ENCODE measurements at regions of chr5 and their contacts with region 1.

Region 1: GRCh38 chr5:133868946-133869518 is 99.4 kb downstream of the C5orf15 start:
- DNase-seq: peak; percentile 77
- CTCF ChIP-seq: peak; percentile 70

Region 2: DNA sequence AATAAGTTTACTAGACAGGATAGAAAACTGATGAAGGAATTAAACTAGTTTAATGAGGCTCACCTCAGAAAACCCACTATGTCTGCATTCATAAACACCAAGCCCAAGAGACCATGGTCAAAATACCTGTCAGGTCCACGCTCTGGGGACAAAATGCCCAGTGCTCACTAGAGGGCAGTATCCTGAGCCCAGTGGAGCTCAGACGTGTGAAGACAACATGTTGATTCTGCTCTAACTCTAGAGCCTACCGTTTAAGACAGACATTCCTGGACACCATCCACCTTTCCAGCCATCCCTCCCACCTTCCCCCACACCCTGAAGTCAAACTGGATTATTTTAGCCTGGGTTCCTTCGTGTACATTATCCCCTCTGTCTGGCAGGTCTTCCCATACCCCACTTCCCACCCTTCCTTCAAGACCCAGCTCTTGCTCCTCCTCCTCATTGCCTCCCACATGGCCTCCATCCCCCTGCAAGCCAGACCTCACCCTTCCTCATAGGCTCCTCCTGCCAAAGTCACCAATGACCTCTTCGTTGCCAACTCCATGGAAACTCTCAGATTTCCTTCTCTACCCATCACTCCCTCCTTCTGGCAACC is 114.4 kb before region 1 on chr5:
- CTCF ChIA-PET with region 1: interaction called, 19 read pairs
- POLR2A ChIA-PET with region 1: no interaction called
- DNase-seq: peak; percentile 47
- CTCF ChIP-seq: peak; percentile 59

Region 3: DNA sequence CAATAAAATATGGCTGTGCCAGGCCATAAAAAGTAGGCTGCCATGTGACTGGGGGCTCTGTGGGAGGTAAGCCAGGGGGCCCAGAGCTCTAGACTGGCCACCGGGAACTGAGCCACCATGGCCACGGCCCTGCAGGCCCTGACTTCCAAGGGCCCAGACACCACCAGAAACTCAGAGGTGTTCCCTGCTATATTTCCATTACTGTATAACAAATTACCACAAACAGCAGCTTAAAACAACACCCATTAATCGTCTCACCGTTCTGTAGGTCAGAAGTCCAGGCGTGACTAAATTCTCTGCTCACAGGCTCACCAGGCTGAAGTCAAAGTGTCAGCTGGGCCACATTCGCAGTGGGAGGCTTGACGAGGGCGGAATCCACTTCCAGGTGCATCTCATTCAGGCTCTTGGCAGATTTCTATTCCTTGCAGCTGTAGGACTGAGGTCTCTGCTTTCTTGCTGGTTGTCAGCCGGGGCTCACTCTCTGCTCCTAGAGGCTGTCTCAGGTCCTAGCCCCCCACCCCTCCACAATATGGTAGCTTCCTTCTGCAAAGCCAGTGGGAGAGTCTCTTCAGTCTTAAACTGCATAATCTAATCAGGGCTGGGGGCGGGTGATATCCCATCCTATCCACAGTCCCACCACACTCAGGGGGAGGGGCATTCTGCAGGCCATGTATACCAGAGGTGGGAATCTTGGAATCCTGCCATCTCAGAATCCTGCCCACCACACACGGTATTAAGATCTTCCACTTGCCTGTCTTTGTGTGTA is 26.0 kb before region 1 on chr5:
- CTCF ChIA-PET with region 1: interaction called, 28 read pairs
- POLR2A ChIA-PET with region 1: no interaction called
- DNase-seq: no peak
- CTCF ChIP-seq: no peak

Region 4: DNA sequence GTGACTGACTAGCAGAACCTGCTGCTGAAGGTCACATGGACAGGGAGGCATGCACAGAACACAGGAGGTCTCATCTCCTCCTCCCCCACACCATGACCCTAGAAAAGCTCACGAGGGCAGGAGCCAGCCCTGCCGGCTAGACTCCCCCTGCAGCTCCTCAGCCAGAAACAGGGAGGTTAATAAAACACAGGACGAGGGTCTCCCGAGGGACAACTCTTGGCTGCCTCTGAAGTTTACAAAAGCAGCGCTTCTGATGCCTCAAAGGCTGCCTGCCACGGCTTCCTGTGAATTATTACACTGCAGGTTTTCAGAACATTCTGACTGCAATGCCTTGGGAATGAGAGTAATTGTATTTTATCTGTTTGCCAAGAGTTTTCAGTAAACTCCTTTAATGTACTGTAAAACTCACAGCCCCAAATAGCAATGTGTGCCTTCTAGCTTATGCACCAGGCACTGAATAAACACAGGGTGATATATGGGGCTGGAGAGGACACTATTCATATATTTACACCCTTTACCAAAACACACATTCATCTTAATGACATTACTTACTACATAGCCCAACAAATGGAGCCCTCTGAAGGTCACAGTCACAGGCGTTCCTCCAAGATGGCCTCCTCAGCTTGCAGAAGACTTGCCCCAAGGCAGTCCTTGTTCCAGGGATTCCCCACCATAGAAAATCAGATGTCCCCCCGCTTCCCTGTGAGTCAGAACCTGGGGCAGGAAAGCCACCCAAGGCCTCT is 15.7 kb after region 1 on chr5:
- CTCF ChIA-PET with region 1: interaction called, 68 read pairs
- POLR2A ChIA-PET with region 1: no interaction called
- DNase-seq: no peak
- CTCF ChIP-seq: no peak

Region 5: GRCh38 chr5:133906303-133906702 is 37.3 kb after region 1 on chr5:
- CTCF ChIA-PET with region 1: interaction called, 10 read pairs
- POLR2A ChIA-PET with region 1: no interaction called
- DNase-seq: peak; percentile 37
- CTCF ChIP-seq: no peak

Measured in GM10248 (cell line).